ENCODE measurements at regions of chr6 and their contacts with region 1.

Region 1: DNA sequence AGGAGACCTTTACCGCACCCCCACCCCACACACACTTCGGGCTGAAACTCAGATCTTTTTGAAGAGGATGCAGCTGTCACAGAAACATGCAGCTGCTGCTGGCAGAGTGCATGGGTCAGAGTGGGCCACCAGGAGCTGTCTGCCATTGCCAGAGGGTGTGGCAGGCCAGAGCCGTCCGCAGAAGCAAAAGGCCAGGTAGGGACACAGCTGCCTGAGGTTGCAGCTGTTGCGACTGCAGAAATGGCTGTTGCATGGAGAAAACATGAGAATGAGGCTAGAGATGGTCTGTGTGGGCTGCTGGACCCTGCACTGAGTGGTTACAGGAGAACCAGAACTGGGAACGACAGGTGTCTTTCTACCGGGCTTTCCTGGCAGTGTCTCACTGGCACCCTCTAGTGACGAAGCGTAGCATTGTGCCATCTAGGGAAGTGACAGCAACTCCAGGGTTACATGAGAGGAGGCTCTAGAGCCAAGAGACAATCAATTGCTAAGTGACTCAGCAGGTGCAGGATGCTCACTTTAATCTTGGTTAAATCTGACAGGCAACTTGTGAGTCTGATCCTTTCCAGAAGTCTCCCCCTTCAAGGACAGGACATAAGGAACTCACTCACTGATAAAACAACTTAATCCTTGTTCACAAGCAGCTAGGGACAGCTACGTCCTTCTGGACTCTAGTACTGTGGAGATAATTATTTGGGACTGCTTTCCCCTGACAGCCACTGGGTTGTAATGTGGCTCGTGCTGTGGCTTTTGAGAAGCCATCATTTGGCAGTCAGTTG is 29.1 kb upstream of the SERPINB9 start:
- DNase-seq: peak; percentile 1
- H3K4me3 ChIP-seq: no peak overlapping the region
- CTCF ChIP-seq: peak; percentile 95

Region 2: GRCh38 chr6:2738373-2738979 is 193.7 kb before region 1 on chr6:
- CTCF ChIA-PET with region 1: interaction called, 30 read pairs
- POLR2A ChIA-PET with region 1: no interaction called
- DNase-seq: no peak
- H3K4me3 ChIP-seq: no peak overlapping the region
- CTCF ChIP-seq: peak; percentile 62

Region 3: DNA sequence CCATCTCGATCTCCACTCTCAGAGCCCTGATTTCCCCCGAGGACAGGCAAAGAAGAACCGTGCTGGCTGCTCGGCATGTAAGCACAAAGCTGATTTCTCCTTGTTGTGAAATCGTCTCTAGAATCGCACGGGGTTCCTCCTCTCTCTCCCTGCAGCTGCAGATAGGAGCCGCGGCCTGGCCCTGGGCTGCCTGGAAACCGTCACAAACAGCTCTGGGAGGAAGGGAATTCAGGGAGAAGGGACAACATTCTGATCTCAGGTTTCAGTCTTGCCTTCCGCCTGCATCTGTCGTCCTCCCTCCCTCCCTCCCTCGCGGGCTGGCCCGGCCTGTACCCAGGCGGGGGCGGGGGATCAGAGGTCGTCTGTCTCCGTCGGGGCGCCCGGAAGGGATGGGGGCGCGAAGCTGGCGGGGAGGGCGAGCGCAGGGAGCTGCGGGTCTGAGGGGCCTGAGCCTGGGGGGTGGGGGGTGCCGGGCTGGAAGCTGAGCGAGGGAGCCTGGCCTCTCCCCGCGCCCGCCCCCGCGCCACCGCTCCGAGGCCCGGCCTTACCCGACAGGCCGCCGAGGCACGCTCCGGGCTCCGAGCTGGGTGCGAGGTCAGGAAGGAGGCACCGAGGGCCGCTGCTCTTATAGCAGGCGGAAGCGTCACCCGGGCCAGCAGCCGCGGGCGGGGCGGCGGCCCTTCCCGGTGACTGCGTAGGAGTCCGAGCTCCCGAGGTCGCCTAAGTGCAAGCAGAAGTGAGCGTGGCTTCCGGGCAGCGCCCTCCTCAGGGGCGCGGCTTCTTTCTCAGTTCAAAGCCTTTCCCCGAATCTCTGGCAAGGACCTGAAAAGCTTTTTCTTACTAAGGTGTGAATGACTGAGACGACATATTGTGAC is 90.7 kb before region 1 on chr6 and contains the start of gene SERPINB1:
- CTCF ChIA-PET with region 1: interaction called, 254 read pairs
- POLR2A ChIA-PET with region 1: no interaction called
- DNase-seq: peak; percentile 72
- H3K4me3 ChIP-seq: peak within 1 kb of the TSS; percentile 55
- CTCF ChIP-seq: no peak

Region 4: GRCh38 chr6:2848851-2849250 is 83.3 kb before region 1 on chr6:
- CTCF ChIA-PET with region 1: interaction called, 254 read pairs
- POLR2A ChIA-PET with region 1: no interaction called
- DNase-seq: no peak
- H3K4me3 ChIP-seq: no peak overlapping the region
- CTCF ChIP-seq: no peak

Region 5: GRCh38 chr6:2853761-2854395 is 78.3 kb before region 1 on chr6:
- CTCF ChIA-PET with region 1: interaction called, 254 read pairs
- POLR2A ChIA-PET with region 1: no interaction called
- DNase-seq: peak; percentile 41
- H3K4me3 ChIP-seq: peak overlapping the region; percentile 57
- CTCF ChIP-seq: peak; percentile 2

Region 6: DNA sequence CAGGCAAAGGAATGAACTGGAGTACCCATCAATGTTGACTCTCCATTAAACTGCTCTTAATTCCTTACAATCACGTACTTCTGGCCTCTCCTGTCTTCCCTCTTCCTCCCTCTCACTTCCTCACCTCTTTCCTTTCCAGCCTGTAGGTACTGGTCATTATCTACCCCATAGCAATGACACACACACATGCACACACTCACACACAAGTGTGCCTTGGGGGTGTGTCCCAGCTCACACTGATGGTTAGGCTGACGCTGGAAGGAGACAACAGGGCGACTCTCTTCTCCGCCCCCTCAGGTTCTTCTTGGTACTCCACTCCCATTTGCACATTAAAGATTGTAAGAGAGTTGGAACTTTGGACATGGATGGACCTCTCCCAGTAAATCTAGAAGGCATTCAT is 15.1 kb before region 1 on chr6:
- CTCF ChIA-PET with region 1: interaction called, 118 read pairs
- POLR2A ChIA-PET with region 1: no interaction called
- DNase-seq: no peak
- H3K4me3 ChIP-seq: no peak overlapping the region
- CTCF ChIP-seq: no peak

Region 7: GRCh38 chr6:2947445-2947844 is 15.3 kb after region 1 on chr6:
- CTCF ChIA-PET with region 1: interaction called, 252 read pairs
- POLR2A ChIA-PET with region 1: no interaction called
- DNase-seq: no peak
- H3K4me3 ChIP-seq: no peak overlapping the region
- CTCF ChIP-seq: no peak